Panc1 (cell line): ENCODE measurements at regions of chr11 and their contacts with region 1.

Region 1: GRCh38 chr11:64358907-64359711 is at the start of gene RPS6KA4:
- DNase-seq: no peak
- ATAC-seq: peak; percentile 79
- H3K4me3 ChIP-seq: peak within 1 kb of the TSS; percentile 76 to 86
- H3K27ac ChIP-seq: peak within 1 kb of the TSS; percentile 88
- H3K4me1 ChIP-seq: peaks cover 48% of the 10 kb centered on the region
- H3K27me3 ChIP-seq: no peaks in the 10 kb centered on the region
- CTCF ChIP-seq: no peak
- total RNA-seq, gene RPS6KA4: 74.0 TPM

Region 2: GRCh38 chr11:64304316-64305072 is 54.6 kb before region 1 on chr11:
- CTCF ChIA-PET with region 1: interaction called, 25 read pairs
- POLR2A ChIA-PET with region 1: interaction called, 4 read pairs
- in situ Hi-C with region 1: no loop called
- intact Hi-C with region 1: no loop called
- DNase-seq: peak; percentile 85
- ATAC-seq: peak; percentile 60
- H3K4me3 ChIP-seq: peak overlapping the region; percentile 72 to 96
- H3K27ac ChIP-seq: peak overlapping the region; percentile 95
- H3K4me1 ChIP-seq: peaks cover 15% of the 10 kb centered on the region
- H3K27me3 ChIP-seq: no peaks in the 10 kb centered on the region
- CTCF ChIP-seq: peak; percentile 99

Region 3: GRCh38 chr11:64331557-64332371 is 27.3 kb before region 1 on chr11:
- CTCF ChIA-PET with region 1: interaction called, 10 read pairs
- POLR2A ChIA-PET with region 1: no interaction called
- in situ Hi-C with region 1: no loop called
- intact Hi-C with region 1: no loop called
- DNase-seq: peak; percentile 80
- ATAC-seq: peak; percentile 86
- H3K4me3 ChIP-seq: peak overlapping the region in 1 of 2 experiments; percentile 28; a peak in 2 of 4 replicates
- H3K27ac ChIP-seq: peak overlapping the region; percentile 61
- H3K4me1 ChIP-seq: peaks cover 26% of the 10 kb centered on the region
- H3K27me3 ChIP-seq: no peaks in the 10 kb centered on the region
- CTCF ChIP-seq: no peak; the same call in 1 of the 2 replicates

Region 4: DNA sequence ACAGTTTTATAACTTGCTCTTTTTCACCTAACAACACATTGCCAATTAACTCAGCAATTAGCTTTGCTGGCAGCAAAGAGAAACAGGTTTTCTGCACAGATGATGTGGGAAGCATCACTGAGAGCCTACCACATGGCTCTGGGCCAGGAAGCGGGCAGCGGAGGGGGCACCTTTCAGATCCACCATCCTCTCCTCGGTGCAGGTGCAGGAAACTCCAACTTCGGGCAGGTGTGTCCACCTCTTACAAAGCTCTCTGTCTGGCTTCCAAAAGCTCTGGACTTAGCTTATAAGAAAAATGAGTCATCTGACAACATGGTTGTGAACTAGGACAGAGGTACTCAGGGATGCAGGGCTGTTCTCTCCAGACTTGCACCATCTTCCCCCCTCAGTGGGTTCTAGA is 76.9 kb after region 1 on chr11:
- CTCF ChIA-PET with region 1: interaction called, 13 read pairs
- POLR2A ChIA-PET with region 1: interaction called, 3 read pairs
- in situ Hi-C with region 1: no loop called
- intact Hi-C with region 1: no loop called
- DNase-seq: no peak
- ATAC-seq: peak; percentile 23; the same call in 1 of the 2 replicates
- H3K4me3 ChIP-seq: no peak overlapping the region
- H3K27ac ChIP-seq: no peak overlapping the region
- H3K4me1 ChIP-seq: no peaks in the 10 kb centered on the region
- H3K27me3 ChIP-seq: no peaks in the 10 kb centered on the region
- CTCF ChIP-seq: no peak

Region 5: GRCh38 chr11:64553551-64554201 is 194.6 kb after region 1 on chr11:
- CTCF ChIA-PET with region 1: no interaction called
- POLR2A ChIA-PET with region 1: no interaction called
- in situ Hi-C with region 1: no loop called
- intact Hi-C with region 1: no loop called
- DNase-seq: peak; percentile 39
- ATAC-seq: peak; percentile 73
- H3K4me3 ChIP-seq: no peak overlapping the region
- H3K27ac ChIP-seq: no peak overlapping the region
- H3K4me1 ChIP-seq: no peaks in the 10 kb centered on the region
- H3K27me3 ChIP-seq: no peaks in the 10 kb centered on the region
- CTCF ChIP-seq: peak; percentile 98

Region 6: DNA sequence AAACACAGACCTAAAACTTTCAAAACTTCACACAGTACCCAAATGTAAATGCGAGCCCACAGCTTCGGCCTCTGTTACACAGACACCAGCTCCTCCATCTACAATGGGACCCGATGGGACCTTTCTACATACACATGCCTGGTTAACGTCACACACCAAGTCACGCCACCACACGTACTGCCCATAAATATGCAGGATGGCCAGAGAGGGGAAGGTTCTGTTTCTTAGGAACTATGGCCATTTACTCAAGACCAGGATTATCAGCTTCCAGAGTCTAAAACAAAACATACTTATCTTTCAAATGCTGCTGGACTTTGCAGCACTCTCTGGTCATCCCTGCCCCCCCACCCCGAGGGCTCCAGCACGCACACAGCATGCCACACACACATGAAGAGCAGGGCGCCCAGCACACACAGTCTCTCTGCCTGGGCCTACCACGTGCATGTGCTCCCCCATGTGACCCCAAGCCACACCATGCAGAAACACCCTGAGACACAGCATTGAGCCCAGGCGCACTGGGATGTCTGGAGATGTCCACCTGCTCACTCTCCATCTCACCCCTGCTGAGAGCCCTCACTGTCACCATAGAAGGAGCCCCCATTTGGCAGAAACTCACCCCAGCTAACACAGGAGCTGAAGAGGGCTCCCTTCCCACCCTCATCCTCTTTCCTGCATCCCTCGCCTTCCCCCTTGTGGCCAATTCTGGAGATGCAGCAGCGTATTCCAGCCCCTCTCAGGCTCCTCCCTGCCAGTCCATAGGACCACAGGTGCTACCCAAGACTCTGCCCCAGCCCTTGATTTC is 293.7 kb after region 1 on chr11:
- CTCF ChIA-PET with region 1: interaction called, 12 read pairs
- POLR2A ChIA-PET with region 1: no interaction called
- in situ Hi-C with region 1: no loop called
- intact Hi-C with region 1: loop called (anchors 5 kb)
- DNase-seq: peak; percentile 58
- ATAC-seq: peak; percentile 90
- H3K4me3 ChIP-seq: no peak overlapping the region
- H3K27ac ChIP-seq: no peak overlapping the region
- H3K4me1 ChIP-seq: no peaks in the 10 kb centered on the region
- H3K27me3 ChIP-seq: no peaks in the 10 kb centered on the region
- CTCF ChIP-seq: peak; percentile 98